ENCODE measurements at regions of chr11 and their contacts with region 1.

Region 1: GRCh38 chr11:85664615-85665481 is at the start of gene CREBZF:
- DNase-seq: peak; percentile 88 to 91
- ATAC-seq: peak; percentile 94
- H3K4me3 ChIP-seq: peak within 1 kb of the TSS; percentile 91 to 98 (median 97)
- H3K27ac ChIP-seq: peak within 1 kb of the TSS; percentile 93 to 99 (median 98)
- H3K4me1 ChIP-seq: peaks cover 35 to 42% of the 10 kb centered on the region in 2 donors
- H3K27me3 ChIP-seq: no peaks in the 10 kb centered on the region
- CTCF ChIP-seq: peak in 1 of 5 experiments; percentile 15
- POLR2A ChIP-seq: peak; percentile 96 to 98
- total RNA-seq, gene CREBZF: 15.3 to 52.3 (median 16.4) TPM

Region 2: GRCh38 chr11:85472953-85473352 is 191.9 kb before region 1 on chr11:
- in situ Hi-C with region 1: no loop called
- intact Hi-C with region 1: loop called (anchors 10 kb)
- DNase-seq: no peak
- ATAC-seq: no peak
- H3K4me3 ChIP-seq: no peak overlapping the region
- H3K27ac ChIP-seq: no peak overlapping the region
- H3K4me1 ChIP-seq: no peaks in the 10 kb centered on the region
- H3K27me3 ChIP-seq: no peaks in the 10 kb centered on the region
- CTCF ChIP-seq: no peak
- POLR2A ChIP-seq: no peak

Region 3: GRCh38 chr11:85595285-85595884 is 69.5 kb before region 1 on chr11:
- in situ Hi-C with region 1: no loop called
- intact Hi-C with region 1: loop called (anchors 2 kb)
- DNase-seq: no peak
- ATAC-seq: no peak
- H3K4me3 ChIP-seq: no peak overlapping the region
- H3K27ac ChIP-seq: no peak overlapping the region
- H3K4me1 ChIP-seq: no peaks in the 10 kb centered on the region
- H3K27me3 ChIP-seq: no peaks in the 10 kb centered on the region
- CTCF ChIP-seq: peak; percentile 40 to 78 (median 67)
- POLR2A ChIP-seq: no peak

Region 4: DNA sequence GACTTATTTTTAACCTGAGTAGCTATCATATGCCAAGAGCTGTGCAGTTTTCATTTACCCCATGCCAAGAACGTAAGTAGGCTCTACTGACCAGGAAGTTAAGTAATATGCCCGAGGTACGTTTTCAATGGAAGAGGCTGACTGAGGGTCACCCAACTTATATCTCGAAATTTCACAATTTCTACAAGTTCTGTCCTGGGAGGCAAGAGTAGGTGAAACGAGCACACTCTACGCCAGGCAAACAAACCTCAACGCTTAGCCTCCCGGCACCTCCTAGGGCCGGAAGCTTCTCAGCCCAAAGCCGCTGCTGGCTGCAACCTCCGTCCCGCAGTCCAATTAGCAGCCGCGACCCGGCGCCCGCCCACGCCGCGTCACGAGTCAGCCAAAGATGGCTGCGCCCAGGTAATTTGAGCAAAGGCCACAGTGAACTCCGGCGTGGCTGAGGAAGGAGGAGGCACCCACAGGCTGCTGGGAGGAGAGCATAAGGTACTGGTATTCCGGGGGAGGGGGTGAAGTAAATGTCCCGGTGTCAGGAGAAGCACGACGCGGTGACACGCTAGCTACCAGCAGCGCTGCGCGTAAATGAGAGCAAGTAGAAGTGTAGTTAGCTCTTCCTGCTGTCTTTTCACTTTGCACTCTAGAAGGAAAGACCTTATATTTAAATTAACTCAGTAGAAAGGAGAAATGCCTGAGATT is 17.1 kb before region 1 on chr11 and contains the start of gene TMEM126A:
- in situ Hi-C with region 1: no loop called
- intact Hi-C with region 1: loop called (anchors 2 kb)
- DNase-seq: peak; percentile 81 to 86
- ATAC-seq: peak; percentile 96
- H3K4me3 ChIP-seq: peak within 1 kb of the TSS; percentile 65 to 80 (median 72)
- H3K27ac ChIP-seq: peak within 1 kb of the TSS; percentile 80 to 89 (median 88)
- H3K4me1 ChIP-seq: peaks cover 14 to 19% of the 10 kb centered on the region in 2 donors
- H3K27me3 ChIP-seq: no peaks in the 10 kb centered on the region
- CTCF ChIP-seq: no peak
- POLR2A ChIP-seq: peak; percentile 34 to 56
- total RNA-seq, gene TMEM126A: 23.9 to 46.8 (median 35.3) TPM

Region 5: GRCh38 chr11:85740481-85741400 is 75.9 kb after region 1 on chr11:
- in situ Hi-C with region 1: no loop called
- intact Hi-C with region 1: no loop called
- DNase-seq: no peak
- ATAC-seq: no peak
- H3K4me3 ChIP-seq: no peak overlapping the region
- H3K27ac ChIP-seq: no peak overlapping the region
- H3K4me1 ChIP-seq: peaks cover 3 to 4% of the 10 kb centered on the region in 2 donors
- H3K27me3 ChIP-seq: no peaks in the 10 kb centered on the region
- CTCF ChIP-seq: no peak
- POLR2A ChIP-seq: no peak